SK-N-SH (cell line): ENCODE measurements at regions of chr3 and their contacts with region 1.

Region 1: DNA sequence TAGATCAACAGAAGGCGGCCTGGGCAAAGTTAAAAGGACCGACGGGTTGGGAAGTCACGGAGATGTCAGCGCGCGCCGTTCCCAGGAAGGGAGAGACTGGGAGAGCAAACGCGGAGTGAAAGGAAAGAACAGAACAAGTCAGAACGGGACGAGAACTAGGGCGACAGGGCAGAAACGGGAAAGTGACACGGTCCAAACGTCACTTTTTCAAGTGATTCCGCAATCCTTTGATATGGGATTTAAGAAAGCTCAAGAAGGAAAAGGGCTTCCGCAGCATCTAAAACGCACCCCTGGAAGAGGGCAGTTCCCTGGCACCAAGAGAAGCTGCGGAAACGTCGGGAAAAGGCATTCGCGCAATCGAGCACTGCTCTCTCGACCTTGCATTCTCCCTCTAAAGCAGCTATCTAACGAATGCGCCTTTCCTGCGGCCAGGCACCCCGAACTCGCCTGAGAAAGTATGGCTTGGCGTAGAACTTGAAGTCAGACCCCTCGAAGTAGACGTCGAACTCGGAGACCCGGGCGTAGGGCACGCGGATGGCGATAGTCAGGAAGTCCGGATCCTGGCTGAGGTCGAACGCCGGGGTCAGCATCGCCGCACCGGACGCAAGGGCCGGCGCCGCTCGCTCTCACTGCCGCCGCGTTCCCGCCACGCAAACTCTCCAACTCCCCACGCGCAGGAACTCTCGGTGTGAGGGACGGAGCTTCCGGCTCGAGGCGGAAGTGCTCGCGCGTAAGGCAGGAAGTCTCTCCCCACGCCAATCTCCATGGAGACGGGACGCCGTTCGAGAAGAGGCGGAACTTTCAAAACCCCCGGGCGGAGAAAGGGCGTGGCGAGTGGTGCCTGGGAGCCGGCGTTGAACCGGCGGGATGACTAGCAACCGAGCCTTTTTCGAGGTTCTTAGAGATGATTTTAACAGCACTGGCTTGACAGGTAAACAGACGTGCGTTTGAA is at the start of gene SHQ1:
- DNase-seq: peak; percentile 93
- H3K4me3 ChIP-seq: peak within 1 kb of the TSS; percentile 94 to 97
- H3K27ac ChIP-seq: peak within 1 kb of the TSS; percentile 73 to 77
- H3K4me1 ChIP-seq: peaks cover 8 to 12% of the 10 kb centered on the region in 2 experiments; a peak in 3 of 4 replicates
- H3K27me3 ChIP-seq: no peaks in the 10 kb centered on the region
- CTCF ChIP-seq: no peak
- EP300 ChIP-seq: no peak
- RAD21 ChIP-seq: no peak
- polyA plus RNA-seq, gene SHQ1: 10.5 and 11.7 TPM in 2 replicates

Region 2: DNA sequence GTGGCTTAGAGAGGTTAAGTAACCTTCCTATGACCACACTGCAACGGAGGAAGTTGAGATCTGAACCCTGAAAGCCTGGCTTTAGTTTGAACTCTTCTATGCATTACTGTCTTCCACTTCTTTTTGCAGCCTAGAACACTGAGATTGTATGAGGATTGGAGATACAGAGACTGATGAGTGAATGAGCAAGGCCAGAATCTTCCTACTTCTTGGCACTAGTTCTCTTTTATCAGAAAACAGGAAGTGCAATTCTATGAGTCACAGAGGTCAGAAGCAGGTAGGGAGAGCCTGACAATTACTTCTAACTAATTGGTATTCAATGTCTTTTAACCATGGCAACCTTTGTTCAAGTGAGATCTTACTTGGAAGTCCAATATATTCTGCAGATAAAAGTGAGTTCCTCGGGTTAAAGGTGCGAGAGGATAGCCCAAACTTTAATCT is 218.8 kb before region 1 on chr3:
- CTCF ChIA-PET with region 1: no interaction called
- POLR2A ChIA-PET with region 1: no interaction called
- DNase-seq: no peak
- H3K4me3 ChIP-seq: no peak overlapping the region
- H3K27ac ChIP-seq: no peak overlapping the region
- H3K4me1 ChIP-seq: peaks cover 0 to 4% of the 10 kb centered on the region in 2 experiments; a peak in 1 of 4 replicates
- H3K27me3 ChIP-seq: no peaks in the 10 kb centered on the region
- CTCF ChIP-seq: no peak
- EP300 ChIP-seq: no peak
- RAD21 ChIP-seq: no peak

Region 3: DNA sequence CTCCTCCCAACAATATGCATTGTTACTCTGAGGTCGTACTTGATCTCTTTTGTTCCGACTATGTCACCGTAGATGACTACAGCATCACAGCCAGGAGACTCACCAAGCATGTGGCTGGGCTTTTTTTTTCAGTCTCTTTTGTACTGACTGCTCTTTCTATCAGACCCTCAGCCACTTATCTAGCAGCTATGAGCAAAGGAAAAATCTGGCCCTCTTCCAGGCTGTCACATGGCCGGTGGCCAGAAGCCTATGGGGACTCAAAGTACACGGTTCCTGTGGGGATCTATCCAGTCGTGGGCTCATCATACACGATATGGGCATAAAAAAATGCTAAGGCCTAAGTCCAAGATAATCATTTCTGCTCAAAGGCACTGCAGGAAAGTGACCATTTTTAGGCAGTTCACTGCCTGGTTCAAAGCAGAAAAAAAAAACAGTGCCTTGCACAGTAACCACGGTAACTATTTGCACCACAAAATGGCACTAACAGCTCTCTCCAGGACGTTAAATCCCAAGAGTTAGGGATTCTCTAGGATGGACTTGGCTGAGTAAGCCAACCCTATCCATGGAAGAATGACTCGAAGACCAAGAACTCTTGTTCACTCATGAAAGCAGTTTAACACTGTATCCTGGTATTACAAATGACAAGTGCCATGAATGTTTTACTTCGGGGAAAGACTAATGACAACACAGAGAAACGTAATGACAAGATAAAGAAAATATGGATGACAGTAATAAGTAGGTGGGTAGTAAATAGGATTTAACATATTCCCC is 50.1 kb before region 1 on chr3:
- CTCF ChIA-PET with region 1: no interaction called
- POLR2A ChIA-PET with region 1: no interaction called
- DNase-seq: peak; percentile 70
- H3K4me3 ChIP-seq: no peak overlapping the region
- H3K27ac ChIP-seq: peak overlapping the region; percentile 52 to 88
- H3K4me1 ChIP-seq: peaks cover 6 to 12% of the 10 kb centered on the region in 2 experiments
- H3K27me3 ChIP-seq: no peaks in the 10 kb centered on the region
- CTCF ChIP-seq: no peak
- EP300 ChIP-seq: no peak
- RAD21 ChIP-seq: peak; percentile 14; the same call in 1 of the 2 replicates

Region 4: GRCh38 chr3:72862314-72863090 is 14.5 kb after region 1 on chr3:
- CTCF ChIA-PET with region 1: interaction called, 27 read pairs
- POLR2A ChIA-PET with region 1: no interaction called
- DNase-seq: peak; percentile 32
- H3K4me3 ChIP-seq: no peak overlapping the region
- H3K27ac ChIP-seq: no peak overlapping the region
- H3K4me1 ChIP-seq: peaks cover 0 to 4% of the 10 kb centered on the region in 2 experiments; a peak in 1 of 4 replicates
- H3K27me3 ChIP-seq: no peaks in the 10 kb centered on the region
- CTCF ChIP-seq: no peak
- EP300 ChIP-seq: no peak
- RAD21 ChIP-seq: no peak

Region 5: GRCh38 chr3:72872183-72872582 is 24.2 kb after region 1 on chr3:
- CTCF ChIA-PET with region 1: interaction called, 27 read pairs
- POLR2A ChIA-PET with region 1: no interaction called
- DNase-seq: no peak
- H3K4me3 ChIP-seq: no peak overlapping the region
- H3K27ac ChIP-seq: peak overlapping the region; percentile 29 to 75; a peak in 3 of 4 replicates
- H3K4me1 ChIP-seq: no peaks in the 10 kb centered on the region
- H3K27me3 ChIP-seq: no peaks in the 10 kb centered on the region
- CTCF ChIP-seq: no peak
- EP300 ChIP-seq: no peak
- RAD21 ChIP-seq: no peak

Region 6: DNA sequence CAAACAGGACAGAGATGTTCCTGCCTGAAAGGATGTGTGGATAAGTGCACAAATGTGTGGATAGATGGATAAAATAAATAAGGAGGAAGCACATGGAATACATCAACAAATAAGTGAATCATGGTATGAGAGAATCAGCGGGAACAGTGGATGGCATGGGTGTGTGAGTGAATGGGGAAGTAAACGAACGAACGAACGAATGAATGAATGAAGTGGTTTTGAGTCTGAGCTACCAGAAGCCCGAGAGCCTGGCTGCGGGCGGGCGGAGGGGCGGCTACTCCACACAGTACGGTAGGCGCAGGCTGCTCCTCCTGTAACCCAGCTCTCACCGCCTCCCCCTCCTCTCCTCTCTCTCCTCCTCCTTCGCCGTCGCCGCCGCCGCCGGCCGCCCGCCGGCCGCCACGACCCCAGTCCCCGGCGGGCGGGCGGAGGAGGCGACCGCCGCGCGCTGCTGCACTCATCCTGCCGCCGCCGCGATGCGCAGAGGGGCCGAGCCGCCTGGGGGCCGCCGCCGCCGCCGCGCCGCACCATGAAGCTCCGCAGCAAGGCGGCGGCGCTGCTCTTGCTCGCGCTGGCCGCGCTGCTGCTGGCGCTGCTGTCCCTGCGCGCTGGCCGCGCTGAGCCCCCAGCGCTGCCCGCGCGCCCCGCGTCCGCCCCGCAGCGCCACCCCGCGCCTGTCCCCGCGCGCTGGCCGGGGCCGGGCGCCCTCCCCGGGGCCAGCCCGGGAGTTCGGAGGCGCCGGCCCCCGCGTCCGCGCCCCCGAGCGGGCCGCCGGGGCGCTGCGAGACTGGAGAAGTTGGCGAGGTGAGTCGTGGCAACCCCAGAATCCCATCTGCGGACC is 39.9 kb after region 1 on chr3 and contains the start of gene GXYLT2:
- CTCF ChIA-PET with region 1: interaction called, 18 read pairs
- POLR2A ChIA-PET with region 1: interaction called, 3 read pairs
- DNase-seq: peak; percentile 89
- H3K4me3 ChIP-seq: peak within 1 kb of the TSS; percentile 68 to 69
- H3K27ac ChIP-seq: peak within 1 kb of the TSS; percentile 73 to 92; a peak in 3 of 4 replicates
- H3K4me1 ChIP-seq: peaks cover 24% of the 10 kb centered on the region in 2 experiments; a peak in 3 of 4 replicates
- H3K27me3 ChIP-seq: no peaks in the 10 kb centered on the region
- CTCF ChIP-seq: no peak
- EP300 ChIP-seq: no peak; a peak in 1 of 4 replicates
- RAD21 ChIP-seq: no peak
- polyA plus RNA-seq, gene GXYLT2: 9.1 and 9.3 TPM in 2 replicates

Region 7: DNA sequence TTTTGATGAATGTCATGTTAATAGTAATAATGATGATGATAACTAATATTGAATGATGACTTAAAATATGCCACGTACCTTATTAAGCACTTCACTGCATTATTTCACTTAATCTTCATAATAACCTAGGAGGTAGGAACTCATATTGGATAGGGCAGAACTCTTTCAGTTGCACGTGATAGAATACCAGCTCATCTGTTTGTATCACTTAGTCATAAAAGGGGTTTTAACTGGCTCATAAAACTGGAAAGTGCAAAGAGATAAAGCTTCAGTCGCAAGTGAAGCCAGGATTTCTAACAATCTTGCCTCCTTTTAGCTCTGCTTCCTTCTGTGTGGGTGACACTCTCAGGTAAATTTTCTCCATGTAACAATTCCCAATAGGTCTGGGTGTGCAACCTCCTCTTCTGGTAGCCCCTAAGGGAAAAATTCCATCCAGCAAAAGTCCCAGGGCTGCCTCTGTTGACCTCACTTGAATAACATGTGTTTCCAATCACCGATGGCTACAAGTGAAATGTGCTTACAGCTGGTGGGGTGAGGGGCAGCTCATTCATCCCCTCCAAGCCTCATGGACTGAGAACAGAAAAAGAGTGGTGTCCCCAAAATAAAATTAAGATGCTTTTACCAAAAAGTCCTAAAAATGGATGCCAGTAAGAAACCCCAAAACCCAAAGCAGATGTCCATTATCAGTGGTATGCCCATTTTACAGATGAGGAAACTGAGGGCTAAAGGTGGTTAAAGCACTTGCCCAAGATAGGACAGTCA is 49.1 kb after region 1 on chr3:
- CTCF ChIA-PET with region 1: interaction called, 12 read pairs
- POLR2A ChIA-PET with region 1: no interaction called
- DNase-seq: peak; percentile 41
- H3K4me3 ChIP-seq: no peak overlapping the region
- H3K27ac ChIP-seq: peak overlapping the region in 1 of 2 experiments; percentile 11; a peak in 1 of 4 replicates
- H3K4me1 ChIP-seq: peaks cover 12 to 14% of the 10 kb centered on the region in 2 experiments; a peak in 3 of 4 replicates
- H3K27me3 ChIP-seq: no peaks in the 10 kb centered on the region
- CTCF ChIP-seq: no peak
- EP300 ChIP-seq: 0 out of 4 replicates have a peak, but pooled peaks of 1 of the 2 experiments have one; percentile 21
- RAD21 ChIP-seq: no peak

Region 8: DNA sequence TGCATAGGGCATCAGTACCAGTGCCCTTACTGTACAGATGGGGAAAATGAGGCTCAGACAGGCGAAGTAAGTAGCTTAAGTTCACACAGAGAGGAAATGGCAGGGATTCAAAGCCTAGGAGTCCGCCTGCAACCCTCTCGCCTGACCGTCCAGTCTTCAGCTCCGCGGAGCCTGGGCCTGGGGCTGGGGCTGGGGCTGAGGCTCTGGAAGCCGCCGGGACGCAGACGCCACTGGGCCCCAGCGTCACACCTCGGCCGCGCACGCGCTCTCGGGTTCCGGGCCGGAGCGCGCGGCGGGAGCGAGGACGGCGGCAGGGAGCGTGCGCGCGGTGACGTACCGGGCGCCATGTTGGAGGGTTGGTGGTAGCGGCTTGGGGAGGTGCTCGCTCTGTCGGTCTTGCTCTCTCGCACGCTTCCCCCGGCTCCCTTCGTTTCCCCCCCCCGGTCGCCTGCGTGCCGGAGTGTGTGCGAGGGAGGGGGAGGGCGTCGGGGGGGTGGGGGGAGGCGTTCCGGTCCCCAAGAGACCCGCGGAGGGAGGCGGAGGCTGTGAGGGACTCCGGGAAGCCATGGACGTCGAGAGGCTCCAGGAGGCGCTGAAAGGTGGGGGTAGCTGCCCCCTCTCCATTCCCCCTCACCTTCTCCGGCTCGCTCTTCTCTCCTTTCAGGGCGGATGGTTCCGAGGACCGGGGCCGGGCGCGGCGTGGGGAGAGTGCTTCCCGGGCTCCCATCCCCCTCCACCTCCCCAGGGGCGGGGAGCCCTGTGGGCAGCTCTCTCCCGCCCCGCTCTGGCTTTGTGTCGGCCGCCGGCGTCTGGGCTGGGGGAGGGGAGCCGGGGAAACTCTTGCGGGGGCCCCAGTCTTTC is 148.7 kb after region 1 on chr3 and contains the start of gene PPP4R2:
- CTCF ChIA-PET with region 1: interaction called, 10 read pairs
- POLR2A ChIA-PET with region 1: no interaction called
- DNase-seq: peak; percentile 94
- H3K4me3 ChIP-seq: peak within 1 kb of the TSS; percentile 78 to 83
- H3K27ac ChIP-seq: peak within 1 kb of the TSS; percentile 90 to 92
- H3K4me1 ChIP-seq: peaks cover 3 to 11% of the 10 kb centered on the region in 2 experiments; a peak in 2 of 4 replicates
- H3K27me3 ChIP-seq: no peaks in the 10 kb centered on the region
- CTCF ChIP-seq: no peak; the same call in 1 of the 2 replicates
- EP300 ChIP-seq: no peak
- RAD21 ChIP-seq: no peak
- polyA plus RNA-seq, gene PPP4R2: 8.9 and 11.3 TPM in 2 replicates

Region 9: GRCh38 chr3:73086071-73086494 is 238.1 kb after region 1 on chr3:
- CTCF ChIA-PET with region 1: interaction called, 36 read pairs
- POLR2A ChIA-PET with region 1: no interaction called
- DNase-seq: peak; percentile 71
- H3K4me3 ChIP-seq: no peak overlapping the region; a peak in 1 of 4 replicates
- H3K27ac ChIP-seq: no peak overlapping the region
- H3K4me1 ChIP-seq: no peaks in the 10 kb centered on the region
- H3K27me3 ChIP-seq: no peaks in the 10 kb centered on the region
- CTCF ChIP-seq: peak; percentile 85
- EP300 ChIP-seq: no peak
- RAD21 ChIP-seq: peak; percentile 97